ENCODE measurements at regions of chr3 and their contacts with region 1.

Region 1: GRCh38 chr3:193168911-193169310 is 72.1 kb upstream of the PLAAT1 start:
- DNase-seq: no peak
- H3K4me3 Mint-ChIP-seq: no peak overlapping the region
- H3K27ac Mint-ChIP-seq: no peak overlapping the region
- H3K4me1 Mint-ChIP-seq: no peaks in the 10 kb centered on the region
- H3K27me3 Mint-ChIP-seq: peaks cover 21% of the 10 kb centered on the region
- CTCF ChIP-seq: no peak

Region 2: DNA sequence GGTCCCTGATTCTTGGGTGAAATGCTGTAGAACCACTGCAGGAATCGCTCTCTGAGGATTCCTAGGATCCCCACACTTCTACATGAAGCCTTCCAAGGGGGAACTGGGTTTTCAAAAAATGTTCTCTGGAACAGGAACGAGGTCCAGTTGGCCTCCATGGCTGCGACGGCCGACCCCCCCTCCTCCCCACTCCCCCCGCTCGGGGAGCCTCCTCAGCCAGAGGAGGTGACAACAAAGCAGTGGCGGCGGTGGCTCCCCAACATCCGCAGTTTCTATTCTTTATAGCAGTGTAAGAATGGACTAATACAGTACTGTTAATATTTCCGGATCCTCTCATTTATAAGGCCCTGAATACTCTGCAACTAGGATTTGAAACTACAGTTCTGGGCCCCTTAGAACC is 11.9 kb before region 1 on chr3:
- CTCF ChIA-PET with region 1: interaction called, 3 read pairs
- intact Hi-C with region 1: loop called (anchors 1 kb)
- DNase-seq: no peak
- H3K4me3 Mint-ChIP-seq: no peak overlapping the region
- H3K27ac Mint-ChIP-seq: no peak overlapping the region
- H3K4me1 Mint-ChIP-seq: no peaks in the 10 kb centered on the region
- H3K27me3 Mint-ChIP-seq: peaks cover 44% of the 10 kb centered on the region
- CTCF ChIP-seq: no peak

Region 3: GRCh38 chr3:193187070-193187722 is 18.3 kb after region 1 on chr3:
- CTCF ChIA-PET with region 1: no interaction called
- intact Hi-C with region 1: no loop called
- DNase-seq: no peak
- H3K4me3 Mint-ChIP-seq: no peak overlapping the region
- H3K27ac Mint-ChIP-seq: no peak overlapping the region
- H3K4me1 Mint-ChIP-seq: no peaks in the 10 kb centered on the region
- H3K27me3 Mint-ChIP-seq: peaks cover 13% of the 10 kb centered on the region
- CTCF ChIP-seq: no peak

Measured in Calu3 (cell line).